ENCODE measurements at regions of chr18 and their contacts with region 1.

Region 1: GRCh38 chr18:74342416-74343043 is 26.9 kb downstream of the C18orf63 start:
- DNase-seq: no peak
- H3K4me3 ChIP-seq: no peak overlapping the region
- H3K27ac ChIP-seq: no peak overlapping the region
- H3K4me1 ChIP-seq: peaks cover 0 to 13% (median 10%) of the 10 kb centered on the region in 4 donors
- H3K27me3 ChIP-seq: no peaks in the 10 kb centered on the region
- CTCF ChIP-seq: peak; percentile 38 to 77 (median 72)
- EP300 ChIP-seq: no peak
- POLR2A ChIP-seq: no peak

Region 2: DNA sequence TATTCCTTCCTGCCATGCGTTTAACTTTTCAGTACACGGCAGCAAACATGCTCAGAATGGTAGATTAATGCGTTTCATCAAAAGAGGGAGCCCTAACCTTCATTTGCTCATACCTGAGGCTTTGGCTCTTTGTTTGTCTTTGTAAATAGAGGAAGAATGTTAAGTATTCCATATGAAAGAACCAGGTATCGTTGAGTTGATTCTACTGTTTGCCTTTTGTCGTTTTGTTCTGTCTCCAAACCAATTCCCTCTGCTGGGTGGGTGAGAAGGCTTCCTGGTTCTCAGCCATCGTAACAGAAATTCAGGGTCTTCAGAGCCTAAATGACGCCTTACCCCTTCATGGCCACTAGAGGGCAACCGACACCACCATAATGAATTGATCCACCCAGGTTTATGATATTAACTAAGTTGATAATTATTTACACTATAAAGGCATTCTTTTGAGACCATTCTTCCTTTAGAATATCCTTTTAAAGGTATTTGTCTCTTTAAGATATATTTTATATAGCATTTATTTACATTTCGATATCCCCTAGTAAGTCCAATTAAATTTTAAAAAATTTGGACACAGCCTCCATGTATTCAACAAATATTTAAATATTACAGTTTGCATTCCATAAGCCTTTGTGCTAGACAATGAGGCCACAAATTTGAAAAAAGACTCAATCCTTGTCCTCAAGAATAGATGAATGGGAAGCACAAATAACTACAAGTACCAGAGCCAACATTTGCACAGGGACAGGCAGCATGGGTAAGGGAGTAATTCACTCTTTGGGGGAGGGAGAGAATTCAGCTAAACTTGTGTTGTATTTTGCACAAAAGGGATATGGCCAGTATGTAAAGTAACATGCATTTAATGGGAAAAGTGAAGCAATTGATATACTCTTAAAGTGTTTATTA is 146.1 kb before region 1 on chr18:
- intact Hi-C with region 1: loop called (anchors 1 kb)
- DNase-seq: no peak
- H3K4me3 ChIP-seq: peak overlapping the region in 3 of 4 donors; percentile 2 to 34 (median 22)
- H3K27ac ChIP-seq: no peak overlapping the region
- H3K4me1 ChIP-seq: peaks cover 0 to 14% (median 6%) of the 10 kb centered on the region in 4 donors
- H3K27me3 ChIP-seq: peaks cover 0 to 6% (median 0%) of the 10 kb centered on the region in 3 donors
- CTCF ChIP-seq: peak; percentile 71 to 91 (median 86)
- EP300 ChIP-seq: no peak
- POLR2A ChIP-seq: no peak

Region 3: DNA sequence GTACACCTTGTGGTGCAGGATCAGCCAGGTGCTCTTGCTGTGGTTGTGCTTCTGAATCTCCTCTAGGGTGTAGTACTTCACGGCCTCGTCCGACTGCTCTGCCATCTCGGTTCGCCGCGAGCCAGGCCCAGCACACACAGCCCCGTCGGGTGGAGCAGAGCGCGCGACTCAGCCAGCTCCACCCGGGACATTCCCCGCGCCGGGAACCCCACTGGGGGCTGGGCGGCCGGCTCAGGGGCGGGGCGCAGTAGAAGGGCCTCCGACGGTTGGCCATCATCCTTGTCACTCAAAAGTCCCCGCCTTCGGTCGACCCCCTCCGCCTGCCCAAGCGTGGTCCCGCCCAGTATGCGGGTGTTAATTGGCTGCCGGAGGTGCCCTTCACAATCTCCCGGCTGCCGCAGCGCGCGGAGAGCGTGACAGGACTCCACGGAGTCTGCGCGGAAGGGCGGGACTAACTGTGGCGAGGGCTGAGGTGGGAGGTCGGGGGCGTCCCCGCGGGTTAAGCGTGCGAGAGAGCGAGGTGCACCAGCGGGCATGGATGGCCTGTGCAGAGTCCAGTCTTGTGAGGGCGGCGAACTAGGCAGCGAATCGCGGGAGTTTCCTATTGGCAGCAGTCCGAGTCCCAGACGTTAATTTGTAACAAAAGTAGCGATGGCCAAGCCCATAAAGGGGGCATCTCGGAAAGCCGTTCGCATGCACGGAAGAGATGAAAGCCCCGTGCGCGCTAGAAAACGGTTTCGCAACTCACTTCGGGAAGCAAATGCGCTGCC is 50.6 kb before region 1 on chr18 and contains the start of gene CYB5A:
- intact Hi-C with region 1: loop called (anchors 5 kb)
- DNase-seq: peak; percentile 99
- H3K4me3 ChIP-seq: peak within 1 kb of the TSS; percentile 71 to 94 (median 84)
- H3K27ac ChIP-seq: peak within 1 kb of the TSS; percentile 80 to 88 (median 84)
- H3K4me1 ChIP-seq: peaks cover 0 to 52% (median 44%) of the 10 kb centered on the region in 4 donors
- H3K27me3 ChIP-seq: no peaks in the 10 kb centered on the region
- CTCF ChIP-seq: no peak
- EP300 ChIP-seq: no peak
- POLR2A ChIP-seq: peak; percentile 36 to 53
- total RNA-seq, gene CYB5A: 137 to 533 (median 241) TPM